ENCODE measurements at regions of chr19 and their contacts with region 1.

Region 1: GRCh38 chr19:45485305-45486077 is 11.4 kb downstream of the RTN2 start:
- DNase-seq: peak; percentile 88
- H3K4me3 ChIP-seq: peak overlapping the region; percentile 49 to 64
- H3K27ac ChIP-seq: peak overlapping the region; percentile 27 to 54; a peak in 1 of 4 replicates
- H3K4me1 ChIP-seq: no peaks in the 10 kb centered on the region; a peak in 1 of 4 replicates
- H3K27me3 ChIP-seq: no peaks in the 10 kb centered on the region
- CTCF ChIP-seq: peak; percentile 67
- EP300 ChIP-seq: no peak
- RAD21 ChIP-seq: peak; percentile 62

Region 2: DNA sequence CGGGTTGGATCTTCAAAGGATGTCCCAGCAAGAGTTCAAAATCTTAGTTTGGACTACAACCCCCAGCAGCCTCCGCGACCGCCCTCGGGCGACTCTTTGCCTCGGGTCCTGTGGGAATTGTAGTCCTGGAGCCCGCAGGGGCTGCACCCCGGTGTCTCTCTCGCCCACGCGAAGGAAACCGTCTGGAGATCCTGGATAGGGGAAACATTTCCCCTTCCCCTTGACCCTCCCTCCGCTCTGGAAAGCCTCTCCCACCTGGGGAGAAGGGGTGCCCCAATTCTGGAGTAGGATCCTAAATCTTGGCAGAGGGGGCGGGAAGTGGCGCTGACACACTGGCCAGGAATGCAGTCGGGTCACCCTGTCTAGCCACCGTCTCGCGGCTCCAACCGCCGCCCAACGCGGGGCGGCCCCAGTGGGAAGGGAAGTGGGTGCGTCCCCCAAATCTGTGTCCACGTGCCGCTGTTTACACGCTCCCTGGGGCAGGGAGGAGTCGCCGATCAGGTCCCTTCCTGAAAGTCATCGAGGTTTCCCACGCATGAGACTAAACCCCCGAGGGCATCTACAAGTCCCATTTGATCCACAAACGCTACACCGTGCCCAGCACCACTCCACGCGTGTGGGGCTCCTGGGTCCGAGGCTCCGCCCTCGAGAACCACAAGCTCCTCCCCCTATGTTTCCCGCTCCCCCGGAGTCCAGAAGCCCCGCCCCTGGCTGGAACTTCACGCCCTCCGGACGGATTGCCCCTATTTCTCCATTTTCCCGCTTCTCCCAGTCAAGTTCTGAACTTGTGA is 79.9 kb before region 1 on chr19:
- CTCF ChIA-PET with region 1: interaction called, 18 read pairs
- POLR2A ChIA-PET with region 1: no interaction called
- DNase-seq: peak; percentile 93
- H3K4me3 ChIP-seq: peak overlapping the region; percentile 87 to 97
- H3K27ac ChIP-seq: peak overlapping the region; percentile 96 to 98
- H3K4me1 ChIP-seq: peaks cover 16 to 26% of the 10 kb centered on the region in 2 experiments; a peak in 3 of 4 replicates
- H3K27me3 ChIP-seq: no peaks in the 10 kb centered on the region
- CTCF ChIP-seq: no peak
- EP300 ChIP-seq: no peak
- RAD21 ChIP-seq: no peak

Region 3: GRCh38 chr19:45423589-45424190 is 61.8 kb before region 1 on chr19 and contains the start of gene ERCC1:
- CTCF ChIA-PET with region 1: interaction called, 73 read pairs
- POLR2A ChIA-PET with region 1: no interaction called
- DNase-seq: peak; percentile 98
- H3K4me3 ChIP-seq: peak within 1 kb of the TSS; percentile 67 to 85
- H3K27ac ChIP-seq: peak within 1 kb of the TSS; percentile 92 to 100
- H3K4me1 ChIP-seq: peaks cover 15 to 20% of the 10 kb centered on the region in 2 experiments
- H3K27me3 ChIP-seq: no peaks in the 10 kb centered on the region
- CTCF ChIP-seq: no peak
- EP300 ChIP-seq: peak; percentile 21 to 28; a peak in 1 of 4 replicates
- RAD21 ChIP-seq: no peak
- polyA plus RNA-seq, gene ERCC1: 93.1 and 95.3 TPM in 2 replicates

Region 4: GRCh38 chr19:45496349-45496953 is 11.0 kb after region 1 on chr19:
- CTCF ChIA-PET with region 1: interaction called, 97 read pairs
- POLR2A ChIA-PET with region 1: interaction called, 14 read pairs
- DNase-seq: peak; percentile 80
- H3K4me3 ChIP-seq: peak overlapping the region; percentile 79 to 83
- H3K27ac ChIP-seq: peak overlapping the region in 1 of 2 experiments; percentile 73; a peak in 2 of 4 replicates
- H3K4me1 ChIP-seq: peaks cover 3 to 16% of the 10 kb centered on the region in 2 experiments; a peak in 2 of 4 replicates
- H3K27me3 ChIP-seq: no peaks in the 10 kb centered on the region
- CTCF ChIP-seq: no peak
- EP300 ChIP-seq: no peak
- RAD21 ChIP-seq: no peak

Region 5: GRCh38 chr19:45598267-45599001 is 112.9 kb after region 1 on chr19:
- CTCF ChIA-PET with region 1: no interaction called
- POLR2A ChIA-PET with region 1: no interaction called
- DNase-seq: peak; percentile 50
- H3K4me3 ChIP-seq: no peak overlapping the region
- H3K27ac ChIP-seq: no peak overlapping the region
- H3K4me1 ChIP-seq: peaks cover 0 to 7% of the 10 kb centered on the region in 2 experiments; a peak in 1 of 4 replicates
- H3K27me3 ChIP-seq: peaks cover 21% of the 10 kb centered on the region; the same call in 1 of the 2 replicates
- CTCF ChIP-seq: no peak
- EP300 ChIP-seq: no peak
- RAD21 ChIP-seq: no peak

Region 6: GRCh38 chr19:45681391-45682015 is 196.0 kb after region 1 on chr19:
- CTCF ChIA-PET with region 1: interaction called, 10 read pairs
- POLR2A ChIA-PET with region 1: no interaction called
- DNase-seq: peak; percentile 91
- H3K4me3 ChIP-seq: peak overlapping the region; percentile 40 to 64
- H3K27ac ChIP-seq: peak overlapping the region; percentile 34 to 36; a peak in 3 of 4 replicates
- H3K4me1 ChIP-seq: peaks cover 0 to 14% of the 10 kb centered on the region in 2 experiments; a peak in 1 of 4 replicates
- H3K27me3 ChIP-seq: no peaks in the 10 kb centered on the region
- CTCF ChIP-seq: peak; percentile 88
- EP300 ChIP-seq: no peak
- RAD21 ChIP-seq: peak; percentile 66